ENCODE measurements at regions of chr6 and their contacts with region 1.

Region 1: DNA sequence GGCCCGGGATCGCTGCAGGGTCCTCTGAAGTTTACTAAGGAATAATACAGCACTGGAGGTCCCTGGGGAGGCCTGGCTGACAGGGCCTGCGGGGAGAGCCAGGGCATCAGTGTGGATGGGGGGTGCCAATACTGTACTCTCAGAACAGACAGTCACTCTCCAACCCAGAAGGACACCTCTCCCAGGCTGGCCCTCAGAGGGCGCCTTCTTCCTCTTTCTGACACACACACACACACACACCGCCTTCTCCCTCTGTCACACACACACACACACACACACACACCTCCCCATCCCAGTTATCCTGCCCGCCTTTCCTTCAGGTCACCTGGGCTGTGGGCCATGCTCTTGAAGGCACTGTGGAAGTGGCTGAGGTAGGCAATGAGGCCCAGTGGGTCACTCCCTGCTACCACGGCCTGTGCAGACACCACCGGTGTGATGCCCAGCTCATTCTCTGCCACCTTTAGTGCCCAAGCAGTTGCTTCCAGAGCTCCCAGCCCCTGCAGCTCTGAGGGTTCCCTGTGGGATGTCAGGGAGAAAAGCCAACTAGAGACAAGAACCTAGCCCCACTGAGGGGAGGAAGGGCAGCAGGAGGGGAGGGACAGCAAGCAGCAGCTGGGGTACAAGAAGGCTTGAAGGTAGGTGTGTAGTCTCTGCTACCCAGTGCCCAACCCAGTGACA is 7.5 kb downstream of the SMPD2 start:
- DNase-seq: no peak
- H3K4me3 ChIP-seq: no peak overlapping the region
- H3K4me3 Mint-ChIP-seq: no peak overlapping the region
- H3K27ac Mint-ChIP-seq: no peak overlapping the region
- H3K4me1 ChIP-seq: no peaks in the 10 kb centered on the region
- H3K4me1 Mint-ChIP-seq: no peaks in the 10 kb centered on the region
- H3K27me3 ChIP-seq: no peaks in the 10 kb centered on the region
- H3K27me3 Mint-ChIP-seq: no peaks in the 10 kb centered on the region
- CTCF ChIP-seq: no peak

Region 2: GRCh38 chr6:108052706-108053105 is 1395.3 kb before region 1 on chr6:
- CTCF ChIA-PET with region 1: no interaction called
- POLR2A ChIA-PET with region 1: no interaction called
- intact Hi-C with region 1: no loop called
- DNase-seq: no peak
- H3K4me3 ChIP-seq: no peak overlapping the region
- H3K4me3 Mint-ChIP-seq: no peak overlapping the region
- H3K27ac Mint-ChIP-seq: no peak overlapping the region
- H3K4me1 ChIP-seq: no peaks in the 10 kb centered on the region
- H3K4me1 Mint-ChIP-seq: no peaks in the 10 kb centered on the region
- H3K27me3 ChIP-seq: no peaks in the 10 kb centered on the region
- H3K27me3 Mint-ChIP-seq: no peaks in the 10 kb centered on the region
- CTCF ChIP-seq: no peak

Region 3: GRCh38 chr6:109373762-109374161 is 74.3 kb before region 1 on chr6:
- CTCF ChIA-PET with region 1: no interaction called
- POLR2A ChIA-PET with region 1: no interaction called
- intact Hi-C with region 1: no loop called
- DNase-seq: no peak
- H3K4me3 ChIP-seq: no peak overlapping the region
- H3K4me3 Mint-ChIP-seq: no peak overlapping the region
- H3K27ac Mint-ChIP-seq: peak overlapping the region; percentile 5
- H3K4me1 ChIP-seq: no peaks in the 10 kb centered on the region
- H3K4me1 Mint-ChIP-seq: peaks cover 11% of the 10 kb centered on the region
- H3K27me3 ChIP-seq: no peaks in the 10 kb centered on the region
- H3K27me3 Mint-ChIP-seq: no peaks in the 10 kb centered on the region
- CTCF ChIP-seq: no peak

Region 4: GRCh38 chr6:109482905-109483735 is 35.1 kb after region 1 on chr6 and contains the start of gene ZBTB24:
- CTCF ChIA-PET with region 1: no interaction called
- POLR2A ChIA-PET with region 1: no interaction called
- intact Hi-C with region 1: loop called (anchors 5 kb)
- DNase-seq: peak; percentile 93 to 95
- H3K4me3 ChIP-seq: peak within 1 kb of the TSS; percentile 91
- H3K4me3 Mint-ChIP-seq: peak within 1 kb of the TSS; percentile 95
- H3K27ac Mint-ChIP-seq: peak within 1 kb of the TSS; percentile 72
- H3K4me1 ChIP-seq: peaks cover 13% of the 10 kb centered on the region
- H3K4me1 Mint-ChIP-seq: peaks cover 27% of the 10 kb centered on the region
- H3K27me3 ChIP-seq: no peaks in the 10 kb centered on the region
- H3K27me3 Mint-ChIP-seq: no peaks in the 10 kb centered on the region
- CTCF ChIP-seq: no peak
- total RNA-seq, gene ZBTB24: 9.2 and 10.3 TPM in 2 replicates

Measured in Caco-2 (cell line).